ENCODE measurements at regions of chr1 and their contacts with region 1.

Region 1: GRCh38 chr1:235415008-235415904 is 48.0 kb downstream of the TBCE start:
- DNase-seq: peak; percentile 70
- ATAC-seq: peak; percentile 76
- H3K4me3 ChIP-seq: no peak overlapping the region
- H3K4me3 Mint-ChIP-seq: no peak overlapping the region
- H3K27ac ChIP-seq: no peak overlapping the region
- H3K27ac Mint-ChIP-seq: no peak overlapping the region
- H3K4me1 ChIP-seq: no peaks in the 10 kb centered on the region
- H3K4me1 Mint-ChIP-seq: no peaks in the 10 kb centered on the region
- H3K27me3 ChIP-seq: no peaks in the 10 kb centered on the region
- H3K27me3 Mint-ChIP-seq: no peaks in the 10 kb centered on the region
- CTCF ChIP-seq: peak; percentile 91

Region 2: GRCh38 chr1:234486498-234487448 is 928.5 kb before region 1 on chr1:
- CTCF ChIA-PET with region 1: interaction called, 10 read pairs
- POLR2A ChIA-PET with region 1: no interaction called
- intact Hi-C with region 1: loop called (anchors 1 kb)
- DNase-seq: no peak
- ATAC-seq: peak; percentile 47
- H3K4me3 ChIP-seq: no peak overlapping the region
- H3K4me3 Mint-ChIP-seq: no peak overlapping the region
- H3K27ac ChIP-seq: no peak overlapping the region
- H3K27ac Mint-ChIP-seq: peak overlapping the region; percentile 15
- H3K4me1 ChIP-seq: peaks cover 18 to 24% of the 10 kb centered on the region in 2 donors
- H3K4me1 Mint-ChIP-seq: peaks cover 30% of the 10 kb centered on the region
- H3K27me3 ChIP-seq: no peaks in the 10 kb centered on the region
- H3K27me3 Mint-ChIP-seq: peaks cover 6% of the 10 kb centered on the region
- CTCF ChIP-seq: peak; percentile 28

Region 3: DNA sequence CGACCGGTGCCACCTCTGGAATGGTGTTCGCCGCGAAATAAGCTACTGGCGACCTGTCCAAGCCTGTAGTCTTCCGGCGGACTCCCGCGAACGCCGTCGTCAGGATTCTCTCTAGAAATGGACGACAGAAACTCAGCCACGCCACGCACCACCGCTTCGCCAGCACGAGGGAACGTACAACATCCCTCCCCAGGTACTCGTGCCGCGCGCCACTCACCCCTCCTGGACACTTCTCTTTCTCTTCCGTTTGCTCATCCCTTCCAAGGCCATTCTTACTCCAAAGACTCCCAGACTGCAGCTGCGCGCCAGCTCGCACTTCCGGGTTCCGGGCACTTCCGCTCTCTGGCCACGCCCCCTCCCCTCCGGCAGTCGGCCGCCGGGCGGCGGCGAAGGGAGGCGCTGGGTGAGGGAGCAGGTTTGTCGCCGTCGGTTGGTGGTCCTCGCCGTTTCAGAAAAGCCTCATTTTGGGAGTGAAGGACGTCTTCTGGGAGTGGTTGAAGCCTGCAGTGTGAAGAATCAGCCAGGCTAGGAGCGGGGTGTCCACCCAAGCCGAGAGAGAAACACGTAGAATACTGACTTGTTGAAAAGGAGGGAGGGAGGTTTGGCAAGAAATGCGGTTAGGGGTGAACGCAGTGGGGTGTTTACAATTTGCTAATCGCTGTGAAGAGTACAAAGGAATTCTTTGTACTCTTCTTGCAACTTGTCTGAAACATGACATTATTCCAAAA is 254.1 kb before region 1 on chr1 and contains the start of gene RBM34:
- CTCF ChIA-PET with region 1: interaction called, 7 read pairs
- POLR2A ChIA-PET with region 1: interaction called, 7 read pairs
- intact Hi-C with region 1: loop called (anchors 10 kb)
- DNase-seq: peak; percentile 95
- ATAC-seq: peak; percentile 92
- H3K4me3 ChIP-seq: peak within 1 kb of the TSS; percentile 67 to 97 (median 78)
- H3K4me3 Mint-ChIP-seq: peak within 1 kb of the TSS; percentile 97
- H3K27ac ChIP-seq: peak within 1 kb of the TSS; percentile 89 to 92
- H3K27ac Mint-ChIP-seq: peak within 1 kb of the TSS; percentile 99
- H3K4me1 ChIP-seq: peaks cover 12 to 21% of the 10 kb centered on the region in 2 donors
- H3K4me1 Mint-ChIP-seq: peaks cover 20% of the 10 kb centered on the region
- H3K27me3 ChIP-seq: no peaks in the 10 kb centered on the region
- H3K27me3 Mint-ChIP-seq: no peaks in the 10 kb centered on the region
- CTCF ChIP-seq: peak; percentile 25
- total RNA-seq, gene RBM34: 131 and 137 TPM in 2 replicates

Region 4: DNA sequence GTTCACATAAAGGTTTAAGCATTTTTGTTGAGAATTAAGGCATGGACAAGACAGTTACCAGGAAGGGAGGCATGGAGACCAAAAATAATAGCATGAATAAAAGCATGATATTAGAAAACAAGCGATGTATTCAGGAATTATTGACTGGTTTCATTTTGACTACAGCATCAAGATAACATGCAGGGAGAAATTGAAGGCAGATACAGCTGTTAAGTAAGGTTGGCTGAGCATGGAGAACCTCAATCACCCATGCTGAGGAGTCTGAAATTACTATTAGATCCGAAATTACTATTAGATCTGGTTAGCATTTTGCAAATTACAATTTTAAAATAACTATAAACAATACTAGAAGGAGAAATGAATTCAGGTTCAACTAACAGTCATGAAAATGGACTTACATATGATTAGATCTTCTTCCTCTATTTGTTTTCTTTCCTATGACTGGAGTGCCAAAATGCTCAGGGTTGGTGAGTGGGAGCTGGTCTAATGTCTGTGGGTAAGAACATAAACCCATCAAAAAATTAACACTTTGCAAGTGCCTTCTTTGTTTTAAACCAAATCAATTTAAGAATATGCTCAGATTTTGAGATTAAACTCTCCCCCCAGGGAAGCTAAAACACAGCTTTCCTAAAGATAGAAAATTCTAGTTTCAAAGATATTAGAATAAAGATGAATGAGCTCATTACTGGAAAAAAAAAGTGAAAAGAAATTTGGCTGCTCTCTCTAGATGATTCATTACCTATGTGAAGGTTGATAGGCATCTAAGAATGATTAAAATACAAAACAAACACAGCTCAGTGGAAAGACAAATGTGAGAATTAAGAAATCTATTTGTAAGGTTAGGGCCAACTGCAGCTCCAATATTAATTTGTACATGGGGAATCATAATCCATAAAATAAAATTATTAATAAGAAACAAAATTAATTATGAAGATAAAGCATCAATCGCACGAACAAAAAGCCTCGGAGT is 168.9 kb before region 1 on chr1:
- CTCF ChIA-PET with region 1: interaction called, 141 read pairs
- POLR2A ChIA-PET with region 1: no interaction called
- intact Hi-C with region 1: no loop called
- DNase-seq: no peak
- ATAC-seq: no peak
- H3K4me3 ChIP-seq: no peak overlapping the region
- H3K4me3 Mint-ChIP-seq: no peak overlapping the region
- H3K27ac ChIP-seq: peak overlapping the region in 1 of 2 donors; percentile 2
- H3K27ac Mint-ChIP-seq: no peak overlapping the region
- H3K4me1 ChIP-seq: no peaks in the 10 kb centered on the region
- H3K4me1 Mint-ChIP-seq: peaks cover 8% of the 10 kb centered on the region
- H3K27me3 ChIP-seq: no peaks in the 10 kb centered on the region
- H3K27me3 Mint-ChIP-seq: no peaks in the 10 kb centered on the region
- CTCF ChIP-seq: no peak

Region 5: GRCh38 chr1:235328357-235329138 is 86.7 kb before region 1 on chr1 and contains the start of gene GGPS1:
- CTCF ChIA-PET with region 1: interaction called, 8 read pairs
- POLR2A ChIA-PET with region 1: no interaction called
- intact Hi-C with region 1: loop called (anchors 5 kb)
- DNase-seq: peak; percentile 98
- ATAC-seq: peak; percentile 75
- H3K4me3 ChIP-seq: peak within 1 kb of the TSS; percentile 89 to 99 (median 99)
- H3K4me3 Mint-ChIP-seq: no peak within 1 kb of the TSS
- H3K27ac ChIP-seq: peak within 1 kb of the TSS; percentile 89 to 98
- H3K27ac Mint-ChIP-seq: no peak within 1 kb of the TSS
- H3K4me1 ChIP-seq: peaks cover 33 to 58% of the 10 kb centered on the region in 2 donors
- H3K4me1 Mint-ChIP-seq: peaks cover 53% of the 10 kb centered on the region
- H3K27me3 ChIP-seq: no peaks in the 10 kb centered on the region
- H3K27me3 Mint-ChIP-seq: no peaks in the 10 kb centered on the region
- CTCF ChIP-seq: peak; percentile 36
- total RNA-seq, gene GGPS1: 43.6 and 46.8 TPM in 2 replicates

Region 6: DNA sequence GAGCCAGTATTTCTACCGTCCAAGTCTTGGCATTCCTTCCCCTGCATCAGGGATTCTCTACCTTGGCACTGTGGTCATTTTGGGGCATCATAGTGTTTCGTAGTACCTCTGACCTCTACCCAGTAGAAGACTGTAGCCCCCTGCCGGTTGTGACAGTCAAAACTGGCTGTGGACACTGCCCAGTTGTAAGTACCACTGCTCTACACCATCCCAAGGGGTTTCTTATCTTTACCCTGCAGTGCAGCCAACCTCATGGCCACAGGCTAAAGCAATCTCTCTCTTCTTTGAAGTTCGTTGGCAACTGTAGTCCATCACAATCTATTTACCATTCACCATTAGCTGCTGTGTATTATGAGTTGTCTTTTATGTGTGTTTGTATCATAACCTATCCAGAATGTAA is 895.8 kb after region 1 on chr1:
- CTCF ChIA-PET with region 1: no interaction called
- POLR2A ChIA-PET with region 1: no interaction called
- intact Hi-C with region 1: no loop called
- DNase-seq: no peak
- ATAC-seq: no peak
- H3K4me3 ChIP-seq: no peak overlapping the region
- H3K4me3 Mint-ChIP-seq: no peak overlapping the region
- H3K27ac ChIP-seq: no peak overlapping the region
- H3K27ac Mint-ChIP-seq: no peak overlapping the region
- H3K4me1 ChIP-seq: no peaks in the 10 kb centered on the region
- H3K4me1 Mint-ChIP-seq: no peaks in the 10 kb centered on the region
- H3K27me3 ChIP-seq: no peaks in the 10 kb centered on the region
- H3K27me3 Mint-ChIP-seq: peaks cover 17% of the 10 kb centered on the region
- CTCF ChIP-seq: no peak

Measured in B cell (primary cell).